ENCODE measurements at regions of chrX and their contacts with region 1.

Region 1: DNA sequence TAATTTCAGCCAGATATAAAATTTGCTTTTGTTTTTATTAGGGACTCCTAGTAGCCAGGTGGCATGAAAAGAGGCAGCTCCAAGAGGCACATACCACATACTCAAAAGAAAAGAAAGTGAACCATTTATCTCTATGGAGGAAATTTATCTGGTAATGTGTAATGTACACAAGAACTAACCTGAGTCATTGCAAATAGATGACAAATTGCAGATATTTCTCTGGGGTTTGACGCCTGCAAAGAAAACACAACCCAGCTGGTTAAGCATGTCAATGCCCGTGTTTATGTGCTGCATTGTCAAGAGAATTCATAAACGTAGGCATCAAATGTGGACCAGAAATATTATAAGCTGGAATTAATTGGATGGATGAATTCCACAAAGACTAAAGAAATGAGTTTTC is 46.9 kb upstream of the PHKA2 start:
- DNase-seq: no peak
- ATAC-seq: no peak
- H3K4me3 Mint-ChIP-seq: no peak overlapping the region
- H3K27ac Mint-ChIP-seq: no peak overlapping the region
- H3K4me1 Mint-ChIP-seq: no peaks in the 10 kb centered on the region
- H3K27me3 Mint-ChIP-seq: peaks cover 0 to 2% (median 0%) of the 10 kb centered on the region in 5 donors

Region 2: GRCh38 chrX:19334945-19335626 is 304.3 kb after region 1 on chrX:
- POLR2A ChIA-PET with region 1: interaction called, 11 read pairs
- DNase-seq: peak in 3 of 10 donors; percentile 22 to 33 (median 25)
- ATAC-seq: peak in 1 of 2 donors; percentile 39
- H3K4me3 Mint-ChIP-seq: no peak overlapping the region
- H3K27ac Mint-ChIP-seq: peak overlapping the region in 1 of 10 donors; percentile 65
- H3K4me1 Mint-ChIP-seq: no peaks in the 10 kb centered on the region
- H3K27me3 Mint-ChIP-seq: peaks cover 0 to 3% (median 0%) of the 10 kb centered on the region in 5 donors

Measured in naive thymus-derived CD8-positive, alpha-beta T cell (primary cell).